ENCODE measurements at regions of chr20 and their contacts with region 1.

Region 1: DNA sequence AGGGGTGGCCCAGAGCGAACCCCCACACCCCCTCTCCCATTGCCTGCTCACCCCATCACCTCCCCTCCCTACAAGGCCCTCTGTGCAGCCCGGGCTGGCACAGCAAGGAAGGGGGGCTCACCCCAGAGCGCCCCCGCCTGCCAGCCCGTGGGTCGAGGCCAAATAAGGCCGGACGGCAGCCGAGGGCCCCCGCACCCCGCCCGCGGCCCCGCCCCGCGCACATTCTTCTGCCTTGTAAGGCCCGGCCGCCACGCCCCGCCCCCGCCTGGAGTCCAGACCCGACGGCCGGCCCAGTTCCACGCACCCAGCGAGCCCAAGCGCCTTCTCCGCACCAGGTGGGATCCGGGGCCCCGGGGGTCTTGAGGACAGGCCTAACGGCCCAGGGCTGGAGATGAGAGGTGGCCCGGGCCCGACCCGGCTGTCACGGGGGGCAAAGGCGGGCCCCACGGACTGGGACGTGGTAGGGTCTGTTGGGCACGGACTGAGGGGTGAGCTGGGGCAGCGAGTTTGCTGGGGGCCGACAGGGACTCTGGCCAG is at the start of gene MYL9:
- DNase-seq: peak; percentile 97
- total RNA-seq, gene MYL9: 2,680 to 3,095 TPM

Region 2: DNA sequence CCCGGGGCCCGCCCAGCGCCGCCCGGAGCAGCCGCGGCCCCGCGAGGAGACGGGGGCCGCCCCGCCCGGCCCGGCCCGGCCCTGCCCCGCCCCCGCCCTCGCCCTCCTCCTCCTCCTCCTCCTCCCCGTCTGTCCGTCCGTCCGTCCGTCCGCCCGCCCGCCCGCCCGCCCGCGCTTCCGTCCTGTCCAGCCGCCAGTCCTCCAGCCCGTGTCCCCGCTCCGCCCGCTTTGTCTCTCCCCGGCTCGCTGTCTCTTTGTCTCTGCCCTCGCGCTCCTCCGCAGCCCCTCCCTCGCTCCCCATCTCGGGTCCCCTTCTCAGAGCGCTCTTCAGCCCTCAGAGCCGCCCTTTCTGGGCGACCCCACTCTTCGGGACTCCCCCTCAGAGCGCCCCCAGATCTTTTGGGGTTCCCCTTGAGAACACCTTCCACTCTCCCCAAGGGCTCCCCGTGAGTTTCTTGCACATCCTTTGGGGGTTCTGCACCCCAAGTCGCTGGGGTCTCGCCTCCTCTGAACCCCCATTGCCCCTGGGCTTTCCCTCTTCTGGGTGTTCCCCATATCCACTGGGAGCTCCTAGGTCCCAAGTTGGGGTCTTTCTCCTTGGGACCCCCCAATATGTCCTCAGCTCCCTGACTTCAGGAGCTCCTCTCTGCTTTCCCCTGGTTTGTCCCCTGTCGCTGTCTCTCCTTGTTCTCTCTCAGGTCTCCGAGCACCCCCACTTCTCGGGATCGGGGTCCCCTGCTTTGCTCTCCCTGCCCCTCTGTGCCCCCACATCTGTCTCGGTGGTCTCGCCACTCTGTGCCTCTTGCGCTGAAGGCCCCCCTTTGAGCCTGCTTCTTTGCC is 79.5 kb before region 1 on chr20:
- intact Hi-C with region 1: loop called (anchors 1 to 5 kb)
- DNase-seq: peak; percentile 92

Region 3: DNA sequence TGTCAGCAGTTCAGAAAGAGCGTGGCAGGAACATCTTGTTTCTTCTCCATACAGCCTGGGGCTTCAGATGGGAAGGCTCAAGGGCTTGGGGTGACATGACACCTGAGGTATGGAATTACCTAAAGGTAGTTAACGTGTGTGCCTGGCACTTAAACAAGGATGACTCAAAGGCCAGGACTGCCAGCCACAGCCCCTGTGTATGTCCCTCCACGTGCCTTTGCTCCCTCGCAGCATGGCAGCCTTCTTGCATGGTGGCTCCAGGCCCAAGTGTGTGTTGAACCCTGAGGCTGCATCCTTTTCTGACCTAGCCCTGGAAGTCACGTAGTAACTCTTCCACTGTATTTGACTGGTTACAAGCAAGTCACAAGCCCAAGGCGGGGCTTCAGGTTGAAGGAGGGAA is 33.5 kb before region 1 on chr20:
- intact Hi-C with region 1: no loop called
- DNase-seq: peak; percentile 73